ENCODE measurements at regions of chr14 and their contacts with region 1.

Region 1: GRCh38 chr14:64012720-64013119 is 159.9 kb downstream of the SYNE2 start:
- DNase-seq: no peak
- H3K4me3 ChIP-seq: no peak overlapping the region
- H3K27ac ChIP-seq: no peak overlapping the region
- H3K4me1 ChIP-seq: no peaks in the 10 kb centered on the region
- H3K27me3 ChIP-seq: no peaks in the 10 kb centered on the region
- CTCF ChIP-seq: no peak
- EP300 ChIP-seq: no peak
- RAD21 ChIP-seq: no peak

Region 2: DNA sequence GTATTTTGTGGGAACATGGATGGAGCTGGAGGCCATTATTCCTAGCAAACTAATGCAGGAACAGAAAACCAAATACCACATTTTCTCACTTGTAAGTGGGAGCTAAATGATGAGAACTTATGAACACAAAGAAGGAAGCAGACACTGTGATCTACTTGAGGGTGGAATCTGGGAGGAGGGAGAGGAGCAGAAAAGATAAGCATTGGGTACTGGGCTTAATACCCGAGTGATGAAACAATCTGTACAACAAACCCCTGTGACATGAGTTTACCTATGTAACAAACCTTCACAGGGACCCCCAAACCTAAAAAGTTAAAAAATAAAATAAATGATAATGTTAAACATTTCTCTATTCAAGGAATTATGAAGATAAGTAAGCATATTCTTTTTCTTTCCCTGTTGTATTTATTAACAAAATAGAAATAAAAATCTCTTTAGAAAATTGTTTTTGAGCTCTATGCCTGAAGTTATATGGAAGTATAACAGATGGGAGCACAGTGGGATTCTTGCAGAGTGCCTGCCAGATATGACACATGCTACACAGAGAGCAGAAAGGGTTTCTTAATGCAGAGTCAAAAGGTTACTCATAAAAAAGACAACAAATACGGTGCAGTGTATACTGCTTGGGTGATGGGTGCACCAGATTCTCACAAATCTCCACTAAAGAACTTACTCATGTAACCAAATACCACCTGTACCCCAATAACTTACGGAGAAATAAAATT is 211.9 kb before region 1 on chr14:
- CTCF ChIA-PET with region 1: interaction called, 10 read pairs
- POLR2A ChIA-PET with region 1: no interaction called
- DNase-seq: no peak
- H3K4me3 ChIP-seq: no peak overlapping the region
- H3K27ac ChIP-seq: no peak overlapping the region
- H3K4me1 ChIP-seq: no peaks in the 10 kb centered on the region
- H3K27me3 ChIP-seq: no peaks in the 10 kb centered on the region
- CTCF ChIP-seq: no peak
- EP300 ChIP-seq: no peak
- RAD21 ChIP-seq: no peak

Region 3: DNA sequence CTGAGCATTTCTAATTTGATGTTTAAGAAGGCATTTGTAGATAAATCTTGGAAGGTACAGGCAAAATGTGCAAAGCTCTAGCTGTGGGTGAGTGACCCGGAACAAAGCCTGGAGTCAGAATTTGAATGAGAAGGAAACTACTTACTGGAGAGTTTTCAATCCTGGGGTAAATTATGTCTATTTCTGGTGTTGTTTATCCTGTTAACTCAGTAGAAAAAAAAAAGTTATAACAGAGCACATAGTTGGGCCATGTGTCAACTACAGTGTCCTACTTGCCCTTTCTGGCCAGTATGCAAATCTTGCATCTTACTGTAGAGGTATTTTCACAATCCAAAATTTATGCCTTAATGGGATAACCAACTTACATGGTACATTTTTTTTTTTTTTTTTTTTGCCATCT is 22.4 kb after region 1 on chr14:
- CTCF ChIA-PET with region 1: interaction called, 13 read pairs
- POLR2A ChIA-PET with region 1: no interaction called
- DNase-seq: no peak
- H3K4me3 ChIP-seq: no peak overlapping the region
- H3K27ac ChIP-seq: no peak overlapping the region
- H3K4me1 ChIP-seq: no peaks in the 10 kb centered on the region
- H3K27me3 ChIP-seq: no peaks in the 10 kb centered on the region
- CTCF ChIP-seq: no peak
- EP300 ChIP-seq: no peak
- RAD21 ChIP-seq: no peak